ENCODE measurements at regions of chrX and their contacts with region 1.

Region 1: GRCh38 chrX:8738588-8739189 is 6.8 kb upstream of the ANOS1 start:
- DNase-seq: no peak
- ATAC-seq: no peak
- H3K4me3 ChIP-seq: no peak overlapping the region
- H3K27ac ChIP-seq: no peak overlapping the region
- H3K4me1 ChIP-seq: no peaks in the 10 kb centered on the region
- H3K27me3 ChIP-seq: no peaks in the 10 kb centered on the region
- CTCF ChIP-seq: peak; percentile 66

Region 2: DNA sequence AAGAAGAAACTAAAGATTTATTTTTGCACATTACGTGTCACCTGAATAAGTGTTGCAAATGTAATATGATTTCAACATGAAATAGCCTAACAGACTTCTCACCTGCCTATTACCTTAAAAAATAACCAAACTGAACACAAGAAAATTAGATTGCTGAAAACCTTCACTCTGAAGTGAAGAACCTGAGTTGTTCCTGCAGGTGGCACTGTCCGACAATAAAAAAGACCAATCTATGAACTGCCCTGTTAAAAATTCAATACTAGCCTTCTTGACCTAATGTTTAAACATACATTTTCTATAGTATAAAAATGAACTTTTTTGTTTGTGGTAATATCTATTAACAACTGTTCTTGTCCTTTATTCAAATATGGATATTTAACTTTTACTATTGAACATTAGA is 742.3 kb before region 1 on chrX:
- CTCF ChIA-PET with region 1: no interaction called
- POLR2A ChIA-PET with region 1: no interaction called
- in situ Hi-C with region 1: no loop called
- intact Hi-C with region 1: loop called (anchors 5 kb)
- DNase-seq: peak; percentile 10
- ATAC-seq: no peak
- H3K4me3 ChIP-seq: no peak overlapping the region
- H3K27ac ChIP-seq: no peak overlapping the region
- H3K4me1 ChIP-seq: no peaks in the 10 kb centered on the region
- H3K27me3 ChIP-seq: no peaks in the 10 kb centered on the region
- CTCF ChIP-seq: peak; percentile 55; the same call in 1 of the 2 replicates

Region 3: DNA sequence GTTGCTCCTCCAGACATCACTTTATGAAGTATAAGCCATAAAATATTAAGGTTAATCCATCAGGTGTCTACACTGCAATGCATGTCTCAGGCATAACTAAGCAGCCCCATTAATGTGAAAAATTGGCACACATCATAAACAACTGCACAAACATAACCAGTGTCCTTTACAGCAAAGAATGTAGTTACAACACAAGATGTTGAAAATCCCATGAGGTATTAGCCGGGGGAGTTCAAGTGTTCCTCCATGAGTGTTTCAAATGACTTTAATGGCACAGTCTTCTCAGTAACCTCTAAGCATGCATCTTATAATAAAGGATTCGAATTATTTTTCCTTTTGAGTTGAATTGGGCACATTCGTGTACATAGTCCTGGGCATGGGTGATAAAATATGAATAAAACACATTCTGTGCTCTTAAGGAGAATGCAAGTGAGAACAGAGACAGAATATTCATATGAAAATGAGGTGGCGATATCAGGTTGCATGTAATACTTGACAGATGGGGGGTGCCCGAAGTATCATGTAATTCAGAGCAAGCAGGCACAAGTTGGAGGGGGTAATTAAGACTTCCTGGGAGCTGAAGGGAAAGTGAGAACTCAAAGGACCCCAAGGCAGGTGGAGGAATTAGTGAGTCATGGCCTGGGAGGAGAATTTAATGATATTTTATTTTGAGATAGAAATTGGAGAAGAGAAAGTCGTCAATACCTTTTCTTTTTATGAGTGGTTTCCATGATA is 549.4 kb before region 1 on chrX:
- CTCF ChIA-PET with region 1: no interaction called
- POLR2A ChIA-PET with region 1: no interaction called
- in situ Hi-C with region 1: no loop called
- intact Hi-C with region 1: no loop called
- DNase-seq: no peak
- ATAC-seq: no peak
- H3K4me3 ChIP-seq: no peak overlapping the region
- H3K27ac ChIP-seq: no peak overlapping the region
- H3K4me1 ChIP-seq: no peaks in the 10 kb centered on the region
- H3K27me3 ChIP-seq: no peaks in the 10 kb centered on the region
- CTCF ChIP-seq: no peak